ENCODE measurements at regions of chr14 and their contacts with region 1.

Region 1: GRCh38 chr14:105490572-105491366 is at the start of gene TEDC1:
- DNase-seq: peak; percentile 99 to 100
- ATAC-seq: peak; percentile 75 to 90 (median 84)
- H3K4me3 ChIP-seq: peak within 1 kb of the TSS; percentile 58 to 89 (median 72)
- H3K27ac ChIP-seq: peak within 1 kb of the TSS; percentile 86 to 100 (median 96)
- H3K4me1 ChIP-seq: peaks cover 31 to 70% (median 56%) of the 10 kb centered on the region in 9 donors
- H3K27me3 ChIP-seq: peaks cover 0 to 20% (median 0%) of the 10 kb centered on the region in 7 donors
- CTCF ChIP-seq: peak; percentile 66 to 94 (median 83)
- total RNA-seq, gene TEDC1: 2.3 to 5.2 (median 4.2) TPM

Region 2: DNA sequence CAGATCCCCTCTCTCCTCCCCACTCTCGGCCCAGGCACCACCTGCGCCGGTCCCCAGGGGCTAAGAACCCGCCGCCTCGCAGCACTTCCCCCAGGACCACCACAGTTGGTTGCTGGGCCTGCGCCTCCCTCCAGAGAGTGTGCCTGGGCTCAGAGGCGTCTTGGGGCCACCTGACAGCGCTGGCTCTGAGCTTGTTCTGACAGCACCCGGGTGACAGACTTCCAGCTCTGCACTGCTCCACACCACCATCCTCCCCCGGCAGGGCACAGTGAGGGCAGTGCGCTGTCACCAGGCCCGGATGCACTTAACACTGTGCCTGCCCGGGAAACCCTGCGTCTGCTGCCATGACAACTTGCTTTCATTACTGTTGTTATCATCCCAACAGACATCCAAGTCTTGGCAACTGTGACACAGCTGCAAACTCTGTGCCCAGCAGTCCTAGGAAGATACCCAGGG is 196.6 kb before region 1 on chr14:
- intact Hi-C with region 1: no loop called
- DNase-seq: peak; percentile 74 to 83
- ATAC-seq: peak; percentile 89 to 99 (median 96)
- H3K4me3 ChIP-seq: no peak overlapping the region
- H3K27ac ChIP-seq: peak overlapping the region in 9 of 10 donors; percentile 59 to 85 (median 69)
- H3K4me1 ChIP-seq: peaks cover 10 to 58% (median 34%) of the 10 kb centered on the region in 9 donors
- H3K27me3 ChIP-seq: no peaks in the 10 kb centered on the region
- CTCF ChIP-seq: no peak

Region 3: DNA sequence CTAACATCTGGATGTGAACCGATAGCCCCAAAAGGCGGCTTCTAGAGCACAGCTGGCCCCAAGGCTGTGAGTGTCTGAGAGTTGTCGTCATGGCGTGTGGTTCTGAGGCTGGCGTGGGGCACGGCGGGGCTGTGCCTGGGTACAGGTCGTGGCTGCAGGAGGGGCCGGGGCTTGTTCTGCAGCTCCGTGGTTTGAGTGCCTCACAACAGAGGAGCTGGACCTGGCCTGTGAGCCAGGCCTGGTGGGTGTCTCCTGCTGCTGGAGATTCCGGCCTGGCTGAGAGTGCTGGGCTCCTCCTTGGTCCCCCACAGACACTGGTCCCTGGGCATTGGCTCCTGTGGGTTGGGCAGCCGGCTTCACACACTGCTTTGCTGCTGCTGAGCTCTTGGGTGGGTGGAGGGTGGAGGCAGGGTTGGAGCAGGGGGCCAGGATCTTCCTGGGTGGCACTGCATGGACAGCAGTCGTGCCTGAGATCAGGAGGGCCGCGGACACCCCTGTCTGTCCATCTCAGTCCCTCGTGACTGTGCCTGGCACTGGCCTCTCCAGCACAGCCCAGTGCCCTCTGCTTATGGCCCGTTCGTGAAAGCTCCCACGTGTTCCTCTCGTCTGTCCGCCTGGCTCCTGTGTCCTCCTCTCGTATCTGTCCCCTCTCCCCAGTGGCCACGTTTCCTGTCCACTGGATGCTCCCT is 124.2 kb before region 1 on chr14:
- intact Hi-C with region 1: loop called in 9 of 10 experiments (anchors 1 to 5 kb)
- DNase-seq: no peak
- ATAC-seq: no peak
- H3K4me3 ChIP-seq: no peak overlapping the region
- H3K27ac ChIP-seq: no peak overlapping the region
- H3K4me1 ChIP-seq: peaks cover 0 to 12% (median 0%) of the 10 kb centered on the region in 9 donors
- H3K27me3 ChIP-seq: no peaks in the 10 kb centered on the region
- CTCF ChIP-seq: no peak

Region 4: GRCh38 chr14:105375635-105376057 is 115.1 kb before region 1 on chr14:
- intact Hi-C with region 1: loop called in 9 of 10 experiments (anchors 1 to 5 kb)
- DNase-seq: no peak
- ATAC-seq: no peak
- H3K4me3 ChIP-seq: no peak overlapping the region
- H3K27ac ChIP-seq: no peak overlapping the region
- H3K4me1 ChIP-seq: peaks cover 0 to 11% (median 0%) of the 10 kb centered on the region in 9 donors
- H3K27me3 ChIP-seq: no peaks in the 10 kb centered on the region
- CTCF ChIP-seq: no peak

Region 5: GRCh38 chr14:105448706-105449111 is 42.1 kb before region 1 on chr14:
- intact Hi-C with region 1: loop called in 7 of 10 experiments (anchors 1 to 5 kb)
- DNase-seq: peak; percentile 79 to 84
- ATAC-seq: peak; percentile 86 to 95 (median 93)
- H3K4me3 ChIP-seq: peak overlapping the region in 3 of 10 donors; percentile 3 to 12 (median 8)
- H3K27ac ChIP-seq: peak overlapping the region in 8 of 10 donors; percentile 6 to 71 (median 36)
- H3K4me1 ChIP-seq: peaks cover 11 to 34% (median 18%) of the 10 kb centered on the region in 9 donors
- H3K27me3 ChIP-seq: no peaks in the 10 kb centered on the region
- CTCF ChIP-seq: peak; percentile 95 to 98 (median 97)

Region 6: GRCh38 chr14:105470804-105471610 is 19.8 kb before region 1 on chr14:
- intact Hi-C with region 1: loop called in 1 of 10 experiments (anchors 2 kb)
- DNase-seq: peak; percentile 78 to 82
- ATAC-seq: peak; percentile 1 to 45 (median 6)
- H3K4me3 ChIP-seq: peak overlapping the region in 8 of 10 donors; percentile 4 to 29 (median 16)
- H3K27ac ChIP-seq: peak overlapping the region; percentile 80 to 100 (median 100)
- H3K4me1 ChIP-seq: peaks cover 62 to 79% (median 72%) of the 10 kb centered on the region in 9 donors
- H3K27me3 ChIP-seq: peaks cover 0 to 28% (median 0%) of the 10 kb centered on the region in 7 donors
- CTCF ChIP-seq: peak in 8 of 9 donors; percentile 11 to 55 (median 38)